ENCODE measurements at regions of chr7 and their contacts with region 1.

Region 1: DNA sequence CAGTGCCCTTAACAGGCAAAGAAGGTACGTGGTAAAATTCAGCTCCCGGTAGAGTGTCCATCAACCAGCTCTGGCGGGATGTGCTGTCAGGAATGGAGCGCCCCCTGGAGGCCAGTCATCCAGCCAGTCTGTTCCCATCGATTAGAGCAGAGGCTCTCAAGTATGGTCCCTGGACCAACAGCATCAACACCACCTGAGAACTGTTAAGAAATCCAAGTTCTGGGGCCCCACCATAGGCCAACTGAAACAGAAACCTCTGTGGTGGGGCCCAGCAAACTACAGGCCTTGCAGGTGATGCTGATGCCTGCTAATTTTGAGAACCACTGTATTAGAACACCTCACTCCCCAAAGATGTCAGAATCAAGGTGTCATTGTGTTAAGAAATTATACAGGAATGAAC is 109.2 kb downstream of the DPY19L1 start:
- DNase-seq: peak; percentile 91
- H3K4me3 Mint-ChIP-seq: no peak overlapping the region
- H3K27ac Mint-ChIP-seq: no peak overlapping the region
- H3K4me1 Mint-ChIP-seq: peaks cover 8% of the 10 kb centered on the region
- H3K27me3 Mint-ChIP-seq: no peaks in the 10 kb centered on the region
- CTCF ChIP-seq: peak; percentile 91

Region 2: DNA sequence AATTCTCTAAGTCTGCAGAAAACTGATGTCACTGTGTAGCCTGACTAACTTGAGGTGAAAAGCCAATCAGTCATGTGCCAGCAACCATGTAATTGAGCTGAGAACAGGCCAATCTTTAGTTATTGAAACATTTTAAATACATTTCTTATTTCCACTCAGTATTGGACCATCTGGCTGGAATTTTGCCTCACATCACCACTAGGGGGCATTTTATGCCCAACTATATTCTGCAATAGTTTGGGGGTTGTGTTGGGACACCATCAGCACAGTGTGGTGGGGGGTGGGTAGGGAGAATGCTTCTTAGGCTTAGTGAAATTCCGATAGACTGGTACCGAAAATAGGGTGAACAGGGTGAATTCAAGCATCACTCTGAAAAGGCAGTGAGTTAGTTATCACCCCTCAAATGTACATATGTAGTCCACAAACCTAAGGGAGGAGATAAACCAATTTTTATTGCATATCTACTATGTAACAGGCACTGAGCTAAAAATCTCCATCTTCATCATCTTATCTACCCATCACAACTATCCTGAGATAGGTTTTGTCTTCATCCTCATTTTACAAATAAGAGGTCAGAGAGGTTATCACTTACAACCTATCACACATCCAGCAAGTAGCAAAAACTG is 252.2 kb before region 1 on chr7:
- CTCF ChIA-PET with region 1: no interaction called
- intact Hi-C with region 1: loop called (anchors 5 kb)
- DNase-seq: peak; percentile 66
- H3K4me3 Mint-ChIP-seq: no peak overlapping the region
- H3K27ac Mint-ChIP-seq: no peak overlapping the region
- H3K4me1 Mint-ChIP-seq: peaks cover 24% of the 10 kb centered on the region
- H3K27me3 Mint-ChIP-seq: no peaks in the 10 kb centered on the region
- CTCF ChIP-seq: peak; percentile 85

Region 3: DNA sequence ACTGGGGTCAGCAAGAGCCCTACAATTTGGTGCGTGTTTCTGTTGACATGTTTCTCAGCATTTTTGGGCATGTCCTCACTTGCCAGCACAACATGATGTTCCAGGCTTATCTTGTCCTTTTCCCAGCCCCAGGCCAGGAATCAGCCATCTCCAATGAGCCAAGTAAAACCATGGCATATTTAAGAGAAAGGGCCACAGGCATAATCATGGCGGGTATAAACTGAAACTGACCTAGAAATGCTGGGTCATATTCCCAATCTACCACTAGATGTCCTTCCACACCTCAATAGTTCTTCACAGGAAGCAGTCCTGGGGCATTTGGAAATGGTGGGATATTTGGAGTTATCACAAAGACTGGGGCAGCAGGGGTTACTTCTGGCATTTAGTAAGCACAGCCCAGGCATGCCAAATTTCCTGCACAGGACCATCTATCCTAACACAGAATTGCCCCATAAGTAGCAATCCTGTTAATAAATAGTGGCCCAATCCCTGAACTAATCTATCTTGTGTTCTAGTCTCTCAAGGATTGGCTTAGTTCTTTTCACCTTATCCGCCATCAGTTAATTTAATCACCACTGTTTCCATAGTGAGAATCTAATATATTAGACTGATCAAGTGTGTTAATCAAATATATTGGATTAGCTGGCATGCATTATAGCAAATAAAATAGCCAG is 168.5 kb before region 1 on chr7:
- CTCF ChIA-PET with region 1: interaction called, 3 read pairs
- intact Hi-C with region 1: loop called (anchors 2 kb)
- DNase-seq: peak; percentile 53
- H3K4me3 Mint-ChIP-seq: no peak overlapping the region
- H3K27ac Mint-ChIP-seq: no peak overlapping the region
- H3K4me1 Mint-ChIP-seq: peaks cover 40% of the 10 kb centered on the region
- H3K27me3 Mint-ChIP-seq: no peaks in the 10 kb centered on the region
- CTCF ChIP-seq: peak; percentile 82

Region 4: GRCh38 chr7:35339811-35340210 is 411.8 kb after region 1 on chr7:
- CTCF ChIA-PET with region 1: no interaction called
- intact Hi-C with region 1: loop called (anchors 5 kb)
- DNase-seq: no peak
- H3K4me3 Mint-ChIP-seq: no peak overlapping the region
- H3K27ac Mint-ChIP-seq: no peak overlapping the region
- H3K4me1 Mint-ChIP-seq: no peaks in the 10 kb centered on the region
- H3K27me3 Mint-ChIP-seq: peaks cover 24% of the 10 kb centered on the region
- CTCF ChIP-seq: no peak